ENCODE measurements at regions of chr3 and their contacts with region 1.

Region 1: GRCh38 chr3:197749601-197750395 is at the start of gene FYTTD1:
- DNase-seq: peak; percentile 86 to 90 (median 88)
- H3K4me3 ChIP-seq: peak within 1 kb of the TSS; percentile 75 to 89
- H3K4me3 Mint-ChIP-seq: peak within 1 kb of the TSS; percentile 93 to 99 (median 98)
- H3K27ac ChIP-seq: peak within 1 kb of the TSS; percentile 86
- H3K27ac Mint-ChIP-seq: peak within 1 kb of the TSS; percentile 97 to 99 (median 99)
- H3K4me1 ChIP-seq: peaks cover 50% of the 10 kb centered on the region
- H3K4me1 Mint-ChIP-seq: peaks cover 26 to 54% (median 39%) of the 10 kb centered on the region in 4 donors
- H3K27me3 ChIP-seq: no peaks in the 10 kb centered on the region
- H3K27me3 Mint-ChIP-seq: peaks cover 0 to 2% of the 10 kb centered on the region in 2 donors
- total RNA-seq, gene FYTTD1: 60.0 to 60.2 TPM

Region 2: GRCh38 chr3:197516517-197516889 is 233.3 kb before region 1 on chr3:
- CTCF ChIA-PET with region 1: no interaction called
- POLR2A ChIA-PET with region 1: no interaction called
- intact Hi-C with region 1: no loop called
- DNase-seq: peak in 1 of 5 donors; percentile 62
- H3K4me3 ChIP-seq: no peak overlapping the region
- H3K4me3 Mint-ChIP-seq: peak overlapping the region in 1 of 8 donors; percentile 12
- H3K27ac ChIP-seq: no peak overlapping the region
- H3K27ac Mint-ChIP-seq: peak overlapping the region in 5 of 7 donors; percentile 24 to 87 (median 39)
- H3K4me1 ChIP-seq: peaks cover 6% of the 10 kb centered on the region
- H3K4me1 Mint-ChIP-seq: peaks cover 3 to 13% (median 12%) of the 10 kb centered on the region in 4 donors
- H3K27me3 ChIP-seq: no peaks in the 10 kb centered on the region
- H3K27me3 Mint-ChIP-seq: no peaks in the 10 kb centered on the region

Region 3: GRCh38 chr3:197554562-197555280 is 195.1 kb before region 1 on chr3:
- CTCF ChIA-PET with region 1: no interaction called
- POLR2A ChIA-PET with region 1: no interaction called
- intact Hi-C with region 1: loop called (anchors 1 kb)
- DNase-seq: peak; percentile 82 to 89 (median 87)
- H3K4me3 ChIP-seq: peak overlapping the region; percentile 71 to 84
- H3K4me3 Mint-ChIP-seq: peak overlapping the region; percentile 90 to 95 (median 93)
- H3K27ac ChIP-seq: peak overlapping the region; percentile 74
- H3K27ac Mint-ChIP-seq: peak overlapping the region; percentile 71 to 95 (median 88)
- H3K4me1 ChIP-seq: peaks cover 14% of the 10 kb centered on the region
- H3K4me1 Mint-ChIP-seq: peaks cover 9 to 19% (median 15%) of the 10 kb centered on the region in 4 donors
- H3K27me3 ChIP-seq: no peaks in the 10 kb centered on the region
- H3K27me3 Mint-ChIP-seq: peaks cover 4 to 6% of the 10 kb centered on the region in 2 donors

Region 4: GRCh38 chr3:197606468-197606867 is 143.3 kb before region 1 on chr3:
- CTCF ChIA-PET with region 1: no interaction called
- POLR2A ChIA-PET with region 1: no interaction called
- intact Hi-C with region 1: no loop called
- DNase-seq: no peak
- H3K4me3 ChIP-seq: no peak overlapping the region
- H3K4me3 Mint-ChIP-seq: no peak overlapping the region
- H3K27ac ChIP-seq: no peak overlapping the region
- H3K27ac Mint-ChIP-seq: peak overlapping the region in 3 of 7 donors; percentile 15 to 65 (median 57)
- H3K4me1 ChIP-seq: no peaks in the 10 kb centered on the region
- H3K4me1 Mint-ChIP-seq: peaks cover 5 to 14% (median 10%) of the 10 kb centered on the region in 4 donors
- H3K27me3 ChIP-seq: no peaks in the 10 kb centered on the region
- H3K27me3 Mint-ChIP-seq: no peaks in the 10 kb centered on the region

Region 5: GRCh38 chr3:197736491-197737318 is 13.1 kb before region 1 on chr3 and contains the start of gene RUBCN:
- CTCF ChIA-PET with region 1: interaction called, 3 read pairs
- POLR2A ChIA-PET with region 1: interaction called, 33 read pairs
- intact Hi-C with region 1: loop called (anchors 1 kb)
- DNase-seq: peak; percentile 93 to 94 (median 94)
- H3K4me3 ChIP-seq: peak within 1 kb of the TSS; percentile 62 to 87
- H3K4me3 Mint-ChIP-seq: peak within 1 kb of the TSS; percentile 95 to 99 (median 98)
- H3K27ac ChIP-seq: peak within 1 kb of the TSS; percentile 80
- H3K27ac Mint-ChIP-seq: peak within 1 kb of the TSS; percentile 89 to 99 (median 98)
- H3K4me1 ChIP-seq: peaks cover 33% of the 10 kb centered on the region
- H3K4me1 Mint-ChIP-seq: peaks cover 24 to 47% (median 32%) of the 10 kb centered on the region in 4 donors
- H3K27me3 ChIP-seq: no peaks in the 10 kb centered on the region
- H3K27me3 Mint-ChIP-seq: no peaks in the 10 kb centered on the region
- total RNA-seq, gene RUBCN: 64.0 to 69.6 TPM

Region 6: GRCh38 chr3:197801891-197802778 is 52.3 kb after region 1 on chr3:
- CTCF ChIA-PET with region 1: no interaction called
- POLR2A ChIA-PET with region 1: no interaction called
- intact Hi-C with region 1: loop called (anchors 2 kb)
- DNase-seq: peak; percentile 20 to 48 (median 36)
- H3K4me3 ChIP-seq: no peak overlapping the region
- H3K4me3 Mint-ChIP-seq: peak overlapping the region in 5 of 8 donors; percentile 3 to 56 (median 24)
- H3K27ac ChIP-seq: no peak overlapping the region
- H3K27ac Mint-ChIP-seq: peak overlapping the region; percentile 74 to 84 (median 77)
- H3K4me1 ChIP-seq: peaks cover 44% of the 10 kb centered on the region
- H3K4me1 Mint-ChIP-seq: peaks cover 34 to 58% (median 43%) of the 10 kb centered on the region in 4 donors
- H3K27me3 ChIP-seq: no peaks in the 10 kb centered on the region
- H3K27me3 Mint-ChIP-seq: no peaks in the 10 kb centered on the region

Region 7: DNA sequence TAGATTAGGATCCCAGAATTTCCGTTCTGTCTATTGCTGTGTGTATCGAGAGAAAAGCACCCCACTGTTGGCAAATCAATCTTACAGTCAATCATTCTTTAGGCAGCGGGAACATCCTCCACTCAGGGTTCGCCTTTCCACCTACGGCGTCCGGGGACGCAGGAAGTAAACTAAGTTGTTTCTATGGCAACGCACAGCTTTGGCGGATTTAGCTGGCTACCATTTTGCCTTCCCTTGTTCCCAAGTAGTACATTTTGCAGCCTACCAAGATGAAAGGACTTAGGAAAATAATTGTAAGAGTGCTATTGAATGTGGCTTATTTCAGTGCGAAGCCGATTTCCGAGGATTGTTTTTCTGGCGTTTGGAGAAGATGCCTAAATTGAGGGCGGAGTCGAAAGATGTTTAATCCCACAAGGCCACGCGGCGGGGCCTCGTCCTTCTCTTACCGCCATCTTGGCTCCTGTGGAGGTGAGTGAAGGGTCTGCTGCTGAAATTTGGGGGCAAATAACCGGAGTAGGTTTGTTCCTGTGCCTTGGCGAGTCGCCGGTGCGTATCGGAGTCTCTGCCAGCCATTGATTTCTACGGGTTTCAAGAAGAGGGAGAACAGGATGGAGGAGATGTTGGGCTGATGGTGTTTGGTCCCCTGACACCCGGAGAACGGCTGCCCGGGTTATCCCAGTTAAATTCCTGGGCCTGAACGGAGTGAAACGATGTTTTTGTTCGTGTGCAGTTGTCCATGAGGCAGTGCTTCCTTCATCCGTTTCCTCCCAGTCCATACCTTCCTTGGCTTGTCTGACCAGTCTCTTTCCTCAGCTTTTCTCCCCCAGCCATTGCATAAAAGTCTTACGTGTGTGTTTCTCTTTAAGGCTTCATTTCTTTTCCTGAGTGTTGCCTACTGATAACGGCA is 200.2 kb after region 1 on chr3 and contains the start of gene RPL35A:
- CTCF ChIA-PET with region 1: no interaction called
- POLR2A ChIA-PET with region 1: interaction called, 3 read pairs
- intact Hi-C with region 1: loop called (anchors 5 kb)
- DNase-seq: peak; percentile 91 to 95 (median 95)
- H3K4me3 ChIP-seq: peak within 1 kb of the TSS; percentile 59 to 80
- H3K4me3 Mint-ChIP-seq: peak within 1 kb of the TSS; percentile 96 to 100 (median 98)
- H3K27ac ChIP-seq: peak within 1 kb of the TSS; percentile 88
- H3K27ac Mint-ChIP-seq: peak within 1 kb of the TSS; percentile 96 to 100 (median 98)
- H3K4me1 ChIP-seq: peaks cover 46% of the 10 kb centered on the region
- H3K4me1 Mint-ChIP-seq: peaks cover 19 to 55% (median 31%) of the 10 kb centered on the region in 4 donors
- H3K27me3 ChIP-seq: no peaks in the 10 kb centered on the region
- H3K27me3 Mint-ChIP-seq: no peaks in the 10 kb centered on the region
- total RNA-seq, gene RPL35A: 1,716 to 1,772 TPM

Measured in CD4-positive, alpha-beta memory T cell (primary cell).